Activated CD4-positive, alpha-beta memory T cell treated with anti-CD3 and anti-CD28 coated beads, Interleukin-2, amount 10 ng/mL, durations not matched to agents 7 days and 5 days (primary cell): ENCODE measurements at regions of chr22 and their contacts with region 1.

Region 1: GRCh38 chr22:23716811-23717801 is 26.3 kb downstream of the RGL4 start:
- DNase-seq: peak; percentile 84
- H3K4me3 Mint-ChIP-seq: peak overlapping the region; percentile 77
- H3K27ac Mint-ChIP-seq: peak overlapping the region; percentile 72
- H3K4me1 Mint-ChIP-seq: peaks cover 19% of the 10 kb centered on the region
- H3K27me3 Mint-ChIP-seq: no peaks in the 10 kb centered on the region

Region 2: GRCh38 chr22:23591201-23591791 is 125.8 kb before region 1 on chr22:
- CTCF ChIA-PET with region 1: no interaction called
- POLR2A ChIA-PET with region 1: no interaction called
- DNase-seq: peak; percentile 62
- H3K4me3 Mint-ChIP-seq: no peak overlapping the region
- H3K27ac Mint-ChIP-seq: no peak overlapping the region
- H3K4me1 Mint-ChIP-seq: peaks cover 7% of the 10 kb centered on the region
- H3K27me3 Mint-ChIP-seq: peaks cover 4% of the 10 kb centered on the region

Region 3: DNA sequence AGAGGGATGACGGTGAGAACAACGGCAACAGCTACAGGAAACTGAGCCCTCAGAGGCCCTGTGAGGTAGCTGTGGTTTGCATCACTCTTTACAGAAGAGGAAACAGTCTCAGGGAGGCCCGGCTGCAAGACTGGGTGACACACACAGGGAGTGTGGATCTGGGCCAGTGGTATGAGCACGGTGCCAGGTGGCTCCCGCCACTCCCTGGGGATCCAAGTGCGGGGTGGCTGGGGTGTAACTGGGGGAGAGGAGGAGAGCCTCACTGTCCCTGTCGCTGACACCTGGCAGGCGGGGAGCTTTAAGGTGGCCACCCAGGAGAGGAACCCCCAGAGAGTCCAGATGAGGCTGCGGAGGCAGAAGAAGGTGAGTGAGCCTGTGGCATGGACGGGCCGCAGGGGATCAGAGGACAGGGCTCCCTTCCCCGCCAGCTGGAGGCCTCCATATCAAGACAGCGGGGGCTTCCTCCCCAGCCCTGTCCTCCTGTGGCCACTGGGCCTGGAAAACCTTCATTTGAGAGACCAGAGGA is 20.7 kb before region 1 on chr22:
- CTCF ChIA-PET with region 1: interaction called, 3 read pairs
- POLR2A ChIA-PET with region 1: interaction called, 38 read pairs
- DNase-seq: peak; percentile 89
- H3K4me3 Mint-ChIP-seq: peak overlapping the region; percentile 93
- H3K27ac Mint-ChIP-seq: peak overlapping the region; percentile 99
- H3K4me1 Mint-ChIP-seq: peaks cover 46% of the 10 kb centered on the region
- H3K27me3 Mint-ChIP-seq: no peaks in the 10 kb centered on the region

Region 4: DNA sequence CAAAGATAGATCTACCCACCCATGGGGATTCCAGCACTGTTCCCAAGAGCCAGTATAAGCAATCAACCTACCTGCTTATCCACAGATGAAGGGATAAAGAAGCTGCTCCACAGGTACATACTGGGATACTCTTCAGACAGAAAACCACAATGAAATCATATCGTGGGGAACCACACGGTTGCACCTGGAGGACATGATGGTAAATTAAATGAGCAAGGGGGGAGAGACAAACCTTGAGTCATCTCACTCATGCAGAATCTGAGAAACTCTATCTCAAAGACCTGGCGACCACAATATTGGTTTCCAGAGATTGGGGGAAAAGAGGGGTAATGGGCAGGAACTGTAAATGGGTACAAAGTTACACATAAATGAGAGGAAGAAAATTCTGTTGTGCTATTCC is 11.7 kb before region 1 on chr22:
- CTCF ChIA-PET with region 1: no interaction called
- POLR2A ChIA-PET with region 1: interaction called, 10 read pairs
- DNase-seq: peak; percentile 32
- H3K4me3 Mint-ChIP-seq: peak overlapping the region; percentile 5
- H3K27ac Mint-ChIP-seq: peak overlapping the region; percentile 82
- H3K4me1 Mint-ChIP-seq: peaks cover 87% of the 10 kb centered on the region
- H3K27me3 Mint-ChIP-seq: no peaks in the 10 kb centered on the region

Region 5: DNA sequence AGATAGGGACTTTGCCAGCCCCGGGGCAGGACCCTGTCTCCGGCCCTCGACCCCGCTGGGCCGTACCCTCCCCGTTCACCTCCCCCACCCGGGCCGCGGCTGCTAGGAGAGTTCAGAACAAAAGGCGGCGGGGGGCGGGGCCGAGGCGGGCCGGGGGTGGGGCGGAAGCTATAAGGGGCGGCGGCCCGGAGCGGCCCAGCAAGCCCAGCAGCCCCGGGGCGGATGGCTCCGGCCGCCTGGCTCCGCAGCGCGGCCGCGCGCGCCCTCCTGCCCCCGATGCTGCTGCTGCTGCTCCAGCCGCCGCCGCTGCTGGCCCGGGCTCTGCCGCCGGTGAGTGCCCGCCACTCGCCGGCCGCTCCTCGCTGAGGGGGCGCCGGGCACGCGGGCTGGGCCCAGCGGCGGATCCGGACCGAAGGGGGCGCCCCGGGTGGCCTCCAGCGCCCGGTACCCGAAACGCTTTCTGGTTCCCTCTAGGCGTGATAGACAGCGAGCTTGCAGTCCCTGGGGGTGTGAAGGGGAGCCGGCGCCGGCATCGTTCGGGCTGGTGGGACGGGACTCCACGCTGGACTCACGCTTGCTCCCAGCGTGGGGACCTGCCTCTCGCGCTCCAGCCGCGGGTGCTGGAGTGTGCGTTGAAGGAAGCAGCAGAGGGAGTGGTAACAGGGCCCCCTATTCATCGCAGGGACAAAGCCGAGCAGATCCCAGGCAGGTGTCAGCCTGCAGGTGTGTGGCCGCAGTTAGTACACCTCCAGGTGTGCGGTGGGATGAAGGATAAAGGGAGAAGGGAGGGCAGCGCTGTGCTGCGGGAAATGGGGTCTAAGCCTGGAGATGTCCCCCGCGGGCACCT is 55.8 kb after region 1 on chr22 and contains the start of gene MMP11:
- CTCF ChIA-PET with region 1: no interaction called
- POLR2A ChIA-PET with region 1: no interaction called
- DNase-seq: peak; percentile 54
- H3K4me3 Mint-ChIP-seq: peak within 1 kb of the TSS; percentile 44
- H3K27ac Mint-ChIP-seq: no peak within 1 kb of the TSS
- H3K4me1 Mint-ChIP-seq: peaks cover 21% of the 10 kb centered on the region
- H3K27me3 Mint-ChIP-seq: peaks cover 16% of the 10 kb centered on the region
- total RNA-seq, gene MMP11: 0.20 to 0.28 TPM